H1 (cell line): ENCODE measurements at regions of chr7 and their contacts with region 1.

Region 1: GRCh38 chr7:21169667-21170580 is 258.0 kb upstream of the SP4 start:
- DNase-seq: peak; percentile 60 to 82
- H3K4me3 ChIP-seq: peak overlapping the region; percentile 43 to 61 (median 56); a peak in 7 of 8 replicates
- H3K27ac ChIP-seq: peak overlapping the region; percentile 79
- H3K4me1 ChIP-seq: peaks cover 2 to 16% (median 11%) of the 10 kb centered on the region in 4 experiments; a peak in 6 of 7 replicates
- H3K27me3 ChIP-seq: no peaks in the 10 kb centered on the region; a peak in 1 of 7 replicates
- CTCF ChIP-seq: no peak
- EP300 ChIP-seq: peak in 1 of 2 experiments; percentile 53; a peak in 1 of 3 replicates
- POLR2A ChIP-seq: peak in 1 of 2 experiments; percentile 73; a peak in 2 of 3 replicates
- RAD21 ChIP-seq: peak in 1 of 2 experiments; percentile 20; a peak in 2 of 4 replicates

Region 2: DNA sequence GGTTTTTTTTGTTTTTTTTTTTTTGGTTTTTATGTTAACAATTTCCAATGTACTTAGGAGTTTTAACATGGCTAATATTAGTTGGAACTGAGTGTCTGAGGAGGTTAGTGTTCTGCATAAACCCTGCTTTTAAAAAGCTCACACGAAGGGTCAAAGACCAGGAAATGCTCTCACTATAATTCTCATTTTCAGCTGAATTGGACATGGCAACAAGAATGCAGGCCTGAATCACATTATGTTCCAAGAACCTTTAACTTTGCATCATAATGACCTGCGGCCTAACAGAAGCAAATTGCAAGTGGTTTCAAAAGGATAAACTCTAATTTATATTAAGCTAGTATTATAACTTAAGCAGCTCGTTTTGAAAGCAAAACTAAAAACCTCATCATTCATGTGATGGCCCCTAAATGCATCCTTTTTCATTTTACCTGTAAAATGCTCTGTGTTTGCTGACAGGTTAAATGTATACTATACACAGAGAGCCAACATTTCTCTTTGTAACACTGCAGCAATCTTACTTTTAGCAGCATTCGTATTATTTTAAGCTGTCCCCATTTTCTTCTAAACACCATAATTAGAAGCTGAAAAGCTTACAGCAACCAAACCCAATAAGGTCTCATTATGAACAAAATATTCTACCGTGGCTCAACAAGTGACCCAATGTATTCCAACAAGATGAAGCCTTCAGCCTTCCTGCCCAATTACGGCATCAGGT is 15.2 kb after region 1 on chr7:
- CTCF ChIA-PET with region 1: interaction called, 6 read pairs
- POLR2A ChIA-PET with region 1: interaction called, 11 read pairs
- DNase-seq: no peak
- H3K4me3 ChIP-seq: no peak overlapping the region
- H3K27ac ChIP-seq: no peak overlapping the region
- H3K4me1 ChIP-seq: peaks cover 0 to 12% (median 0%) of the 10 kb centered on the region in 4 experiments; a peak in 1 of 7 replicates
- H3K27me3 ChIP-seq: no peaks in the 10 kb centered on the region
- CTCF ChIP-seq: no peak
- EP300 ChIP-seq: no peak
- POLR2A ChIP-seq: no peak
- RAD21 ChIP-seq: no peak

Region 3: DNA sequence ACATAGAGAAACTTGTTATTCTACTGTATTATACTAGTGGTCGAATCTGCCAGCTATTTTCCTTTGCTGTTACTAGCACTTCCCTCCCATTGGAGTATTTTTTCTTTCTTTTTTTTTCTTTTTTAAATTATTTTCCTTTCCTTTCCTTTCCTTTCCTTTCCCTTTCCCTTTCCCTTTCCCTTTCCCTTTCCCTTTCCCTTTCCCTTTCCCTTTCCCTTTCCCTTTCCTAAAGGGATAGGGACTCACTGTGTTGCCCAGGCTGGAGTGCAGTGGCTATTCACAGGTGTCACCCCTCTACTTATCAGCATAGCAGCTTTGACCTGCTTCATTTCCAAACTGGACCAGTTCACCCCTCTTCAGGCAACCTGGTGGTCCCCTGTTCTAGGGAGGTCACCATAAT is 45.4 kb after region 1 on chr7:
- CTCF ChIA-PET with region 1: no interaction called
- POLR2A ChIA-PET with region 1: no interaction called
- DNase-seq: no peak
- H3K4me3 ChIP-seq: no peak overlapping the region
- H3K27ac ChIP-seq: no peak overlapping the region
- H3K4me1 ChIP-seq: no peaks in the 10 kb centered on the region
- H3K27me3 ChIP-seq: no peaks in the 10 kb centered on the region
- CTCF ChIP-seq: no peak
- EP300 ChIP-seq: no peak
- POLR2A ChIP-seq: no peak
- RAD21 ChIP-seq: no peak